ENCODE measurements at regions of chr7 and their contacts with region 1.

Region 1: GRCh38 chr7:140003913-140004382 is 58.8 kb downstream of the PARP12 start:
- DNase-seq: no peak
- H3K4me3 ChIP-seq: no peak overlapping the region
- H3K27me3 ChIP-seq: no peaks in the 10 kb centered on the region; the same call in 1 of the 2 replicates
- CTCF ChIP-seq: peak; percentile 60

Region 2: DNA sequence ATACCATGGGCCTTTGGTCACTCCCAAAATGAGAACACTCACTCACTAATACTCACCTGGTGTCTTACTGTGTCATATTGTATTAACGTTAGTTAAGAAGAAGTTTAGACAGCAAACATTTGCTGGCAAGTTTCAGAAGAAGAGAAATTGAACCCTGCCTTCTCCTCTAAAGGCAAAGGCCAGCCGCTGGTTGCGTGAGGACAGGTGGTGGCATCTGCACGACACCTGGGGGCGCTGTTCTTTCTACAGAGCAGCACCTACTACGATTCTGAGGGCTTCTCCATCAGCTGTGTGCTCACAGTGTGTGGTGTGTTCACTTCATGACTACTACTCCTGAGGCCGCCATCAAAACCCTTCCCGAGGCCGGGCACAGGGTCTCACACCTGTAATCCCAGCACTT is 498.4 kb before region 1 on chr7:
- CTCF ChIA-PET with region 1: interaction called, 76 read pairs
- POLR2A ChIA-PET with region 1: no interaction called
- DNase-seq: no peak
- H3K4me3 ChIP-seq: no peak overlapping the region
- H3K27me3 ChIP-seq: no peaks in the 10 kb centered on the region
- CTCF ChIP-seq: no peak

Region 3: DNA sequence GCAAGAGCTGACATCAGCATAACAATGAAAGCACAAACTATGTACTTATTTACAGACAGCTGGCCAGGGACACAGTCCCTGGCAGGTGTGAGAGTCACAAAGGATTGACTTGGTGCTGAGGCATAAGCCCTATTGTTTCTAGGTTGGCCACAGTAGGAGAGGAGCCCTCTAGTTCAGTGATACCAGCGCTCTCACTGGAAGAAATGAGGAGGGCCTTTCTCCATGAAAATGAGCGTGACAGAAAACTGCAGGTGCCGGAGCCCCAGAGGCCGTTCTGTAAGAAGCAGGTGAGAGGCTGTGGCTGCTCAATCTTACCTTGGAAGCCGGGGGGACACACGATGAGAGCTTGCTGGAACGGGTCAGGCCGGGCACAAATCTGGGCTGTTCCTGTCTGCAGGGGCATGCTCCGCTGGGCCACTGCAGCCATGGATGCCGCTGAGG is 390.0 kb before region 1 on chr7:
- CTCF ChIA-PET with region 1: interaction called, 132 read pairs
- POLR2A ChIA-PET with region 1: no interaction called
- DNase-seq: no peak
- H3K4me3 ChIP-seq: no peak overlapping the region
- H3K27me3 ChIP-seq: no peaks in the 10 kb centered on the region
- CTCF ChIP-seq: no peak

Region 4: GRCh38 chr7:139640681-139641080 is 363.3 kb before region 1 on chr7:
- CTCF ChIA-PET with region 1: interaction called, 107 read pairs
- POLR2A ChIA-PET with region 1: no interaction called
- DNase-seq: no peak
- H3K4me3 ChIP-seq: no peak overlapping the region
- H3K27me3 ChIP-seq: no peaks in the 10 kb centered on the region
- CTCF ChIP-seq: no peak

Region 5: GRCh38 chr7:139651308-139651707 is 352.6 kb before region 1 on chr7:
- CTCF ChIA-PET with region 1: interaction called, 107 read pairs
- POLR2A ChIA-PET with region 1: no interaction called
- DNase-seq: no peak
- H3K4me3 ChIP-seq: no peak overlapping the region
- H3K27me3 ChIP-seq: no peaks in the 10 kb centered on the region
- CTCF ChIP-seq: no peak

Region 6: DNA sequence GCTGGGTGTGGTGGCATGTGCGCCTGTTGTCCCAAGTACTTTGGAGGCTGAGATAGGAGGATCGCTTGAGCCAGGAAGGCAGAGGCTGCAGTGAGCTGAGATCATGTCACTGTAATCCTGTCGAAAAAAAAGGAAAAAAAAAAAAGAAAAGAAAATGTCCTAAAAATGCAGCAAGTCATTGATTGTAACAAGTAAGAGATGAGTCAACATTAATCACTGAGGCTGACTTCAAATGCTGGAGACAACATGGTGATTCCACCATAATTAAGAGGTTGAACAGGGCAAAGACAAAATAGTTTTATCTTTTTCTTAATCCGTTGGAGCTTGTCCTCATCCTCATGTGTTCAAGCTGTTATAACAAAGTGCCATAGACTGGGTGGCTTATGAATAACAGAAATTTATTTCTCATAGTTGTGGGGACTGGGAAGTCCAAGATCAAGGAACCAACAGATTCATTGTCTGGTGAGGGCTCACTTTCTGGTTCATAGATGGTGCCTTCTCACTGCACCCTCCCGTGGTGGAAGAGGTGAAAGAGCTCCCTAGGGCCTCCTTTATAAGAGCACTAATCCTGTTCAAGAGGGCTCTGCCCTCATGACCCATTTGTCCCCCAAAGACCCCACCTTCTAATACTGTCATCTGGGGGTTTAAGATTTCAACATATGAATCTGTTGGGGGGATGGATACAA is 114.6 kb before region 1 on chr7:
- CTCF ChIA-PET with region 1: no interaction called
- POLR2A ChIA-PET with region 1: no interaction called
- DNase-seq: no peak
- H3K4me3 ChIP-seq: no peak overlapping the region
- H3K27me3 ChIP-seq: peaks cover 3% of the 10 kb centered on the region; the same call in 1 of the 2 replicates
- CTCF ChIP-seq: no peak

Measured in BJ (cell line).